ENCODE measurements at regions of chr1 and their contacts with region 1.

Region 1: GRCh38 chr1:205273551-205273982 is 45.8 kb downstream of the TMCC2 start:
- DNase-seq: peak; percentile 91
- H3K4me3 Mint-ChIP-seq: no peak overlapping the region
- H3K27ac Mint-ChIP-seq: no peak overlapping the region
- H3K4me1 Mint-ChIP-seq: peaks cover 18% of the 10 kb centered on the region
- H3K27me3 Mint-ChIP-seq: peaks cover 42% of the 10 kb centered on the region
- CTCF ChIP-seq: peak; percentile 93

Region 2: DNA sequence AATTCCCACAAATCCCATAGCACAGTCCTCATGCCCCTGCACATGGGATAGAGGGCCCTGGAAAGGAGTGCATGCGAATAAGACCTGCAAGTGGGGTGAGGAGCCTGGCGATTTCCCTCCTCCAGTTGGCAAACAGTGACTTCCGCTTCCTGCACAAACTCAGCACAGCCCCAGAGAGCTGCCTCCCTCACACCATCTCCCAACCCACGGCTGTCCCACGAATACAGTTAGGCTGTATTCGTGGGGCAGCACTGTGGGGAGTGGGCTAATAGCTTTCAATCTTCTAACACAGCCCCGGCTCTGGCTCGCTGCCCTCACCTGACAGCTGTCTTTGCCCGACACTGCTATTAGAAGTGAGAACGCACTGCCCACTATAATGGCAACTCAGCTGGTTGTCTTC is 258.8 kb before region 1 on chr1:
- CTCF ChIA-PET with region 1: no interaction called
- intact Hi-C with region 1: no loop called
- DNase-seq: no peak
- H3K4me3 Mint-ChIP-seq: no peak overlapping the region
- H3K27ac Mint-ChIP-seq: no peak overlapping the region
- H3K4me1 Mint-ChIP-seq: no peaks in the 10 kb centered on the region
- H3K27me3 Mint-ChIP-seq: peaks cover 94% of the 10 kb centered on the region
- CTCF ChIP-seq: no peak

Region 3: GRCh38 chr1:205237526-205238484 is 35.8 kb before region 1 on chr1:
- CTCF ChIA-PET with region 1: no interaction called
- intact Hi-C with region 1: no loop called
- DNase-seq: no peak
- H3K4me3 Mint-ChIP-seq: no peak overlapping the region
- H3K27ac Mint-ChIP-seq: no peak overlapping the region
- H3K4me1 Mint-ChIP-seq: no peaks in the 10 kb centered on the region
- H3K27me3 Mint-ChIP-seq: no peaks in the 10 kb centered on the region
- CTCF ChIP-seq: no peak

Region 4: DNA sequence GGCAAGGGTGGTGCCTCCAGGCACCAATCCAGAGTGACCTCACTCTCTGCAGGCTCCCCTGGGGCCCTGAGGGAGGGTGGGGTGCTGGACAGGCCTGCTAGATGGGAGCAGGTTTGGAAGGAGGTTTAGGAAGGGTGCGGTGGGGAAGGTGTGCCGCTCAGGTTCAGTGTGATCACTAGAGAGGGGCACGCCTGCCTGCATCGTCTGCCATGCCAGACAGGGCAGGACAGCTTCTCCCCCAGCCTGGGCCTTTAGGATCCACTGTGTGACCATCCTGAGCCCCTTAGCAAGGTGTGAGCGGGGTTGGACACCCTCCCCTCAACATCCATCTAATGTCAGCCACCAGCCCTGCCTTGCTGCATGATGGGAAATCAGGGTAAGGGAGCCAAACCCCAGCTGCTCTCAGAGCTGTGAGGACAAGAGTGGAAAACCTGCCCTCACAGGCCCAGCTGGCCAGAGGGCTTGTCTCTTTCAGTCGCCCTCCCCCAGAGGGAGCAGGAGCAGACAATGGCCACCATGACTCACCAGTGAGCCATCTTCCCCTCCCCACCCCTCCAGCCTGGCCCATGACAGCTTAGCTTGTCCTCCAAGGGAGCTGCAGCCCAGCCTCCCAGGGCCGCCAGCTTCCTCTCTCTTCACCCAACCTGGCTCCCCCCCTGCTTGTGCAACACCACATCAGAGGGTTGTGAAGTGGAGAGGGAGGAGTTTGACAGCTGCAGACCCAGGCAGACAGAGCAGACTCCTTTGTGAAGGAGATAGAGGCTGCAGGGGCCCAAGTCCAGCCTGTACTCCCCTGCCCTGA is 11.0 kb after region 1 on chr1:
- CTCF ChIA-PET with region 1: interaction called, 14 read pairs
- intact Hi-C with region 1: no loop called
- DNase-seq: peak; percentile 89
- H3K4me3 Mint-ChIP-seq: no peak overlapping the region
- H3K27ac Mint-ChIP-seq: no peak overlapping the region
- H3K4me1 Mint-ChIP-seq: peaks cover 19% of the 10 kb centered on the region
- H3K27me3 Mint-ChIP-seq: no peaks in the 10 kb centered on the region
- CTCF ChIP-seq: no peak

Region 5: GRCh38 chr1:205354259-205354904 is 80.8 kb after region 1 on chr1:
- CTCF ChIA-PET with region 1: interaction called, 16 read pairs
- intact Hi-C with region 1: no loop called
- DNase-seq: peak; percentile 74
- H3K4me3 Mint-ChIP-seq: no peak overlapping the region
- H3K27ac Mint-ChIP-seq: no peak overlapping the region
- H3K4me1 Mint-ChIP-seq: peaks cover 25% of the 10 kb centered on the region
- H3K27me3 Mint-ChIP-seq: peaks cover 26% of the 10 kb centered on the region
- CTCF ChIP-seq: peak; percentile 88